ENCODE measurements at regions of chr3 and their contacts with region 1.

Region 1: DNA sequence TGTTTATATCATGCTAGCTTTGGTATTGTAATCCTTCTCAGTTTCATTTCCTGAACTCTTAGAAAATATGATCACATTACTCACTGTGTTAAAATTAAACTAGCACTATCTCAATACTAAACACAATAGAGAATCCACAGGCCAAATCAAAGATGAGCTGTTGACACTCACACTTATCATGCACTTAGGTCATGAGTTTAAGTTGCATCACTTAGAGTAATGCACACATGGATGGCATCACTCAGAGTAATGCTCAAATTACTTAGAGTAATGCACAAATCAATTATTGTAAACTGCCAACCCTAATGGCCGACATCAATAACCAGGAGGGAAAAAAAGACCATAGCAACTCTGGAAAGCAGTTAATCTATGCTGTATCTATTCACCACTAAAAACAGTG is 40.0 kb upstream of the MCF2L2 start:
- DNase-seq: no peak
- ATAC-seq: no peak
- H3K4me3 ChIP-seq: no peak overlapping the region
- H3K27ac ChIP-seq: no peak overlapping the region
- H3K4me1 ChIP-seq: peaks cover 27% of the 10 kb centered on the region
- H3K27me3 ChIP-seq: no peaks in the 10 kb centered on the region
- CTCF ChIP-seq: no peak
- EP300 ChIP-seq: no peak
- POLR2A ChIP-seq: no peak
- RAD21 ChIP-seq: no peak

Region 2: GRCh38 chr3:183502237-183503181 is 34.1 kb after region 1 on chr3:
- CTCF ChIA-PET with region 1: no interaction called
- POLR2A ChIA-PET with region 1: no interaction called
- in situ Hi-C with region 1: no loop called
- intact Hi-C with region 1: no loop called
- DNase-seq: no peak
- ATAC-seq: peak; percentile 52
- H3K4me3 ChIP-seq: no peak overlapping the region
- H3K27ac ChIP-seq: no peak overlapping the region
- H3K4me1 ChIP-seq: peaks cover 26% of the 10 kb centered on the region
- H3K27me3 ChIP-seq: no peaks in the 10 kb centered on the region; a peak in 1 of 5 replicates
- CTCF ChIP-seq: peak; percentile 69
- EP300 ChIP-seq: no peak
- POLR2A ChIP-seq: no peak
- RAD21 ChIP-seq: no peak

Region 3: DNA sequence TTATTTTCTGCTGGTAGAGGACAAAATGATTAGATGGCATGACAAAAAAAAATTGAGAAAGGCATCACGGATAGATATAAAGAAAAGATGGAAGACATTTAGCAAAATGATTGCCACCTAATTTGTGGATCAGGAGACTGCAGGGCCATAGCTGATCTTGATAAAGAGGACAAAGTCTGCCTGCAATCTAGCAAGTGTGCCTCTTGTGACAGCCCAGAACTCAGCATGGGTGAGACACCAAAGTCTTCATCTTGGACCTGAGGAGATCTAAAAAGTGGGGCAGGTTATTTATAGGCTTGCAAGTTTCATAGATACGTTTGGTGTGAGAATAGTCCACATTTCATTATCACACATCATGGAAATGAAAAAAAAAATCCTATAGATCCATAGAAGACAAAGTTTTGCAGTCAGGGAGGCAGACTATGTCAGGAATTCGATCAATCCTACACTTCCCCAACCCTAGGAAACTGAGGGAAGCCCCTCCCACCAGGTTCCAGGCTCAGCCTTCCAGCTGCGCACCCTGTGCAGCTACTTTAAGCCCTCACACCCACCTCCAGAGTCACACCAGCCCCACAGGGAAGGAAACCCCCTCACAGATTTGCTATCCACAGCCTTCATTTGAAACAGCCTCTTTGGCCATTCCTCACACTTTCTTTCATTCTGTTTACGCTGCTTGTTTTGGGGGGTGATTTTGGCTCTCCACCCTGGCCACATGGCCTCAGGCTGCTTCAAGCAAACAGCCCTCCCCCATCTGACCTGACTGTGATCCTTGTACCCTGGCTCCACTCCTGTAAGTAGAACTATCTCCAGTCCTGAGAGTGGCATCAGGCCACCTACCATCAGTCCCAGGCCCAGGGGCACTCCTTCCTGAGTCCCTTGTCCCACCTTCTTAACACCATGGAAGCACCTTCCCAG is 115.2 kb after region 1 on chr3:
- CTCF ChIA-PET with region 1: no interaction called
- POLR2A ChIA-PET with region 1: no interaction called
- in situ Hi-C with region 1: no loop called
- intact Hi-C with region 1: loop called (anchors 1 kb)
- DNase-seq: no peak
- ATAC-seq: peak; percentile 66
- H3K4me3 ChIP-seq: no peak overlapping the region; a peak in 1 of 6 replicates
- H3K27ac ChIP-seq: no peak overlapping the region
- H3K4me1 ChIP-seq: peaks cover 27% of the 10 kb centered on the region
- H3K27me3 ChIP-seq: no peaks in the 10 kb centered on the region
- CTCF ChIP-seq: no peak
- EP300 ChIP-seq: no peak
- POLR2A ChIP-seq: no peak
- RAD21 ChIP-seq: no peak

Region 4: GRCh38 chr3:183766745-183767606 is 298.6 kb after region 1 on chr3:
- CTCF ChIA-PET with region 1: interaction called, 25 read pairs
- POLR2A ChIA-PET with region 1: no interaction called
- in situ Hi-C with region 1: no loop called
- intact Hi-C with region 1: loop called (anchors 1 kb)
- DNase-seq: peak; percentile 67
- ATAC-seq: peak; percentile 98
- H3K4me3 ChIP-seq: no peak overlapping the region
- H3K27ac ChIP-seq: no peak overlapping the region
- H3K4me1 ChIP-seq: no peaks in the 10 kb centered on the region
- H3K27me3 ChIP-seq: no peaks in the 10 kb centered on the region
- CTCF ChIP-seq: peak; percentile 90
- EP300 ChIP-seq: no peak
- POLR2A ChIP-seq: no peak
- RAD21 ChIP-seq: peak; percentile 88

Region 5: DNA sequence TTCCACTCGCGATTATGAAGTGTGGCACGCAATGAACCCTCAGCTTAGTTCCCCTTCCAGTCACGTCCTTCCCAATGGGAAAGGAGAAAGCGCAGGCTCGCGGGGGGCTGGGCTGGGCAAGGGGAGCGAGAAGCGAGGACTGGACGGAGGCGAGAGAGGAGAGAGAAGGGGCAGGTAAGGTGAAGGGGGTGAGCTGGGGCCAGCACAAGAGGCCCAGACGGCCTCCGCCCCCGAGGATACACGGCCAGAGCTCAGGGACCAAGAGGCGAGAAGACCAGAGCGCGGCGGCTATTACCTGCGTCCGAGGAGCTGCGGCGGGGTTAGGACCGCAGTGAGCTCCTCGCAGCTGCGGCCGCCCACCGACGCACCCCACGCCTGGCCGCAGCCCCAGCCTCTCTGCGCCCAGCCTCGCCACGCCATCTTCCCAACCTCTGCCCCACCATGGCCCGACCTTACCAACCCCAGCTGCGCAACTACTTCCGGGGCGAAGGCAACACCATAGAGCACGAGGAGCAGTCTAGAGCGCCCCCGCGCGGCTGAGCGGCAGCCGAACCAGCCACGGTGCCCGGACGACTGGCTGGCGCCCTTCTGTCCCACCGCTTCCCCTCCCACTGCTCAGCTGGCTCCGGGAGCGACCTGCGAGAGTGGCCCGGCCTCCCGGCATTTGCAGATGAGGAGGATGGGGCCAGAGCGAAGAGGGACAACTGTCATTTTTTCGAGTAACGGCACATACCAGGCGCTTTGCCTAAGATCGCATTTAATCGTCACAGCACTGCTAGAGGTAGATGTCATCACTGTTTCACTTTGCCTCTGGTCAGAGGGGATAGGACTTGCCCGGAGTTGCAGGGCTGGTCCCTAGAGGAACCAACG is 416.2 kb after region 1 on chr3 and contains the start of gene PARL:
- CTCF ChIA-PET with region 1: no interaction called
- POLR2A ChIA-PET with region 1: no interaction called
- in situ Hi-C with region 1: no loop called
- intact Hi-C with region 1: loop called (anchors 5 kb)
- DNase-seq: peak; percentile 91
- ATAC-seq: peak; percentile 99
- H3K4me3 ChIP-seq: peak within 1 kb of the TSS; percentile 84 to 89 (median 84)
- H3K27ac ChIP-seq: peak within 1 kb of the TSS; percentile 71
- H3K4me1 ChIP-seq: peaks cover 22% of the 10 kb centered on the region; the same call in 1 of the 2 replicates
- H3K27me3 ChIP-seq: no peaks in the 10 kb centered on the region; a peak in 1 of 5 replicates
- CTCF ChIP-seq: peak; percentile 99
- EP300 ChIP-seq: peak in 1 of 2 experiments; percentile 61; a peak in 1 of 4 replicates
- POLR2A ChIP-seq: peak; percentile 90 to 94
- RAD21 ChIP-seq: peak; percentile 82
- total RNA-seq, gene PARL: 58.6 and 60.5 TPM in 2 replicates